OCI-LY7 (cell line): ENCODE measurements at regions of chrX and their contacts with region 1.

Region 1: DNA sequence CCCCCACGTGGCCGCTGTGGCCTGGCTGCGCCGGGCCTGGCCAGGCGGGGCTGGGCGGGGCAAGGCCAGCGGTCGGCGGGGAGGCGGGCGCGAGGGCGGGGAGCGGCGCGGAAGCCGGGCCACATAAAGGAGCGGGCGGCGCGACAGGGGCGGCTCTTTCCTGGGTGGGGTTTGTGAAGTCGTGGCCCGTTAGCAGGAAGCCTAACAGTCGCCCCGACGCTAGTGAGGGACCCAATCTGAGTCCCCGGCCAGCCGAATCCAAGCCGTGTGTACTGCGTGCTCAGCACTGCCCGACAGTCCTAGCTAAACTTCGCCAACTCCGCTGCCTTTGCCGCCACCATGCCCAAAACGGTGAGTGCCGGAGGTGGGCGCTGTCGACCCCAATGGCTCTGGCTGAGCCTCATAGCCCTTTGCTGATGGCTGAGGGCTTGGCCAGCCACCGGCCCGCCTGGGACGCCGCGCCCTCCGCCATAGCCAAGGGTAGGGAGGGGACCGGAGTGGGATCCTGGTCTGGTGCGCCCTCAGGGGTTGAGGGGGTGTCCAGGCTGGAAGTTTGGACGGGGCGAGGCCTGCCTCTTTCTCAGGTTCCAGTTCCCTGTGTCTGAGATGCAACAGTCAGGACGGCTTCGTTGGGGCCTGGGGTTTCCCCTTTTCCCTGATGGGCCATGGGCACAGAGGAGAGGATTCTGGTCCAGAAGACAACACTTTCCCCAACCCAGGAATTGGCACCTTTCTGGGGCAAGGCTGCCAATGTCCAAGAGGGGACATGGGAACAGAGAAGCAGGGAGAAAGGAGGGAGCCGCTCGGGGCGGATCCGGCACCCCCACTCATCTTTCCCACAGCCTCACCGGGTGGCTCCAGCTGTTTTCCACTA is at the start of gene MSN:
- DNase-seq: peak; percentile 67
- H3K4me3 ChIP-seq: peak within 1 kb of the TSS; percentile 84
- H3K27ac ChIP-seq: peak within 1 kb of the TSS; percentile 71
- H3K4me1 ChIP-seq: peaks cover 40% of the 10 kb centered on the region
- CTCF ChIP-seq: peak; percentile 47
- total RNA-seq, gene MSN: 95.1 and 95.8 TPM in 2 replicates

Region 2: GRCh38 chrX:65688403-65688871 is 20.7 kb after region 1 on chrX:
- CTCF ChIA-PET with region 1: interaction called, 4 read pairs
- POLR2A ChIA-PET with region 1: interaction called, 23 read pairs
- intact Hi-C with region 1: no loop called
- DNase-seq: peak; percentile 70
- H3K4me3 ChIP-seq: peak overlapping the region; percentile 26
- H3K27ac ChIP-seq: peak overlapping the region; percentile 71
- H3K4me1 ChIP-seq: peaks cover 91% of the 10 kb centered on the region
- CTCF ChIP-seq: no peak

Region 3: GRCh38 chrX:65697915-65698796 is 30.4 kb after region 1 on chrX:
- CTCF ChIA-PET with region 1: interaction called, 4 read pairs
- POLR2A ChIA-PET with region 1: interaction called, 15 read pairs
- intact Hi-C with region 1: loop called (anchors 1 kb)
- DNase-seq: peak; percentile 87
- H3K4me3 ChIP-seq: peak overlapping the region; percentile 58
- H3K27ac ChIP-seq: peak overlapping the region; percentile 100
- H3K4me1 ChIP-seq: peaks cover 90% of the 10 kb centered on the region
- CTCF ChIP-seq: no peak

Region 4: DNA sequence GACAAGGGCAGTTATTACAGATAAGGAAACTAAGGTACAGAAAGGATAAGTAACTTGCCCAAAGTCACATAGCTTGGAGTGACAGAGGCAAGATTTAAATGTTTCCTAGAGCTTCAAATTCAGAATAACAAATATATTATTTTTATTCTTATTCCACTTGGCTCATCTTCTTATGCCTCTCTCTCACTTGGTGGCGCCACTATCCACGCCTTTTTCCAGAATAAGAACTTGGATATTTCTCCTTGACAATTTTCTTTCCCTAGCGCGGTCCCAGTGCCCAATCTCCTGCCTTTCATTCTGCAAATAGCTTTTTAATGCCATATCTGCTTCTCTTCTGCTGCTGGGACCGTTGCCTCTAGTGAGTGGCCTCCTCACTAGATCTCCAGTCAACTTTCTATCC is 78.3 kb after region 1 on chrX:
- CTCF ChIA-PET with region 1: no interaction called
- POLR2A ChIA-PET with region 1: no interaction called
- intact Hi-C with region 1: loop called (anchors 5 kb)
- DNase-seq: no peak
- H3K4me3 ChIP-seq: no peak overlapping the region
- H3K27ac ChIP-seq: no peak overlapping the region
- H3K4me1 ChIP-seq: no peaks in the 10 kb centered on the region
- CTCF ChIP-seq: peak; percentile 48; the same call in 1 of the 2 replicates